Naive thymus-derived CD4-positive, alpha-beta T cell (primary cell): ENCODE measurements at regions of chr10 and their contacts with region 1.

Region 1: DNA sequence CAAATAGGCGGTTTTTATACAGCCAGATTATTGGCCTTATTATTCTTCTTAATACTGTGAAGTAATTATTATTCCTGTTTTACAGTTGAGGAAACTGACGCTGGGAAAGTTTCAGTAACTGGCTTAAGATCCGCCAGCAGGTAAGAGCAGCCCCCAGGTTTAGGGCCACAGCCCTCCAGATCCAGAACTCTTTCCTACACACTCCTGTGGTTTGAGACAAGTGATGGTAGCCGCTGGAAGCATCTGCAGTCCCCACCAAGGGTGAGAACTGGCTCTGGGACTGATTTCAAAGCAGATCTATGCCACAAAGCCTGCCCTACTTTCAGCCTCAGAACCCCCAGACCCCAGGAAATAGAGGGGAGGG is 3.0 kb upstream of the UNC5B start:
- DNase-seq: no peak
- ATAC-seq: no peak
- H3K4me3 ChIP-seq: no peak overlapping the region
- H3K4me3 Mint-ChIP-seq: no peak overlapping the region
- H3K27ac ChIP-seq: no peak overlapping the region
- H3K27ac Mint-ChIP-seq: no peak overlapping the region
- H3K4me1 ChIP-seq: peaks cover 0 to 4% of the 10 kb centered on the region in 2 donors
- H3K4me1 Mint-ChIP-seq: peaks cover 0 to 18% (median 14%) of the 10 kb centered on the region in 7 donors
- H3K27me3 ChIP-seq: peaks cover 0 to 7% of the 10 kb centered on the region in 2 donors
- H3K27me3 Mint-ChIP-seq: peaks cover 47 to 77% (median 68%) of the 10 kb centered on the region in 5 donors

Region 2: DNA sequence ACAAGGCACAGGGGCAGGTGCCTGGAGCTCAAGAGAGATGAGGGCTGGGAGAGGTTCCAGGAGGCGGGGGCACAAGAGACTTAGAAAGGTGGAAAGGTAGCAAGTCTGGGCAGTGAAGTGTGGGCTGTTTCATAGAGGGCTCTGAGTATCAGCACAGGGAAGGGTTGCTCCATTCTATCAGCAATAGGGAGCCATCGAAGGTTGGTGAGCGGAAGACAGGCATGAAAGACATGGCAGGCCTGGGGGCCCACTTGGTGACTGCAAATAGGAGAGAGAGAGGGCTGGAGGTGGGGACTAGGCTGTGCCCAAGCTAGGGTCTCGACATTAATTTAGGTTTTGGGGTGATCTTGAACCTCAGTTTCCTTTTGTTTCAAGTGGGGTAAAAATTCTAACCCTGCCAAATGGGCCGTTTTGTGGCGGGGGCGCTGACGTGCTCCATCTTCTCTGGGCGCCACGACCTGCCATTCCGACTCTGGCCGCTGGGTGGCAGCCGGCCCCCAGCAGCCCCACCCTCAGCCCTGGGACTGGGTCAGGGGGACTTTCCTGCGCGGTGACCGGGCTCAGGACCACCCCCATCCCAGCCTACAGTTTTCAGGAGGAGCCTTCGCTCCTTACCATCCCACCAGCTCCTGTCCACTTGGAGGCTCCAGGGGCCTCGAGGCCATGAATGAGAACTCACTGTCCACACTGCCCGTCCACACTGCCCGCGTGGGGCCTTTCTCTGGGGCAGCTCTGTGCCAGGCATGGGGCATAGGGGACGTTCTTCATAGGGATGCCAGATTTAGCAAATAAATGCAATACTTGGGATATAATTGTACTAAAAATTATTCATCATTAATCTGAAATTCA is 283.7 kb before region 1 on chr10:
- CTCF ChIA-PET with region 1: no interaction called
- POLR2A ChIA-PET with region 1: no interaction called
- intact Hi-C with region 1: loop called in 1 of 2 experiments (anchors 1 kb)
- DNase-seq: peak in 6 of 9 donors; percentile 16 to 71 (median 34)
- ATAC-seq: peak; percentile 76
- H3K4me3 ChIP-seq: no peak overlapping the region
- H3K4me3 Mint-ChIP-seq: peak overlapping the region in 3 of 10 donors; percentile 20 to 40 (median 33)
- H3K27ac ChIP-seq: no peak overlapping the region
- H3K27ac Mint-ChIP-seq: no peak overlapping the region
- H3K4me1 ChIP-seq: no peaks in the 10 kb centered on the region
- H3K4me1 Mint-ChIP-seq: peaks cover 0 to 7% (median 6%) of the 10 kb centered on the region in 7 donors
- H3K27me3 ChIP-seq: no peaks in the 10 kb centered on the region
- H3K27me3 Mint-ChIP-seq: peaks cover 0 to 11% (median 6%) of the 10 kb centered on the region in 5 donors